B cell (primary cell): ENCODE measurements at regions of chr2 and their contacts with region 1.

Region 1: DNA sequence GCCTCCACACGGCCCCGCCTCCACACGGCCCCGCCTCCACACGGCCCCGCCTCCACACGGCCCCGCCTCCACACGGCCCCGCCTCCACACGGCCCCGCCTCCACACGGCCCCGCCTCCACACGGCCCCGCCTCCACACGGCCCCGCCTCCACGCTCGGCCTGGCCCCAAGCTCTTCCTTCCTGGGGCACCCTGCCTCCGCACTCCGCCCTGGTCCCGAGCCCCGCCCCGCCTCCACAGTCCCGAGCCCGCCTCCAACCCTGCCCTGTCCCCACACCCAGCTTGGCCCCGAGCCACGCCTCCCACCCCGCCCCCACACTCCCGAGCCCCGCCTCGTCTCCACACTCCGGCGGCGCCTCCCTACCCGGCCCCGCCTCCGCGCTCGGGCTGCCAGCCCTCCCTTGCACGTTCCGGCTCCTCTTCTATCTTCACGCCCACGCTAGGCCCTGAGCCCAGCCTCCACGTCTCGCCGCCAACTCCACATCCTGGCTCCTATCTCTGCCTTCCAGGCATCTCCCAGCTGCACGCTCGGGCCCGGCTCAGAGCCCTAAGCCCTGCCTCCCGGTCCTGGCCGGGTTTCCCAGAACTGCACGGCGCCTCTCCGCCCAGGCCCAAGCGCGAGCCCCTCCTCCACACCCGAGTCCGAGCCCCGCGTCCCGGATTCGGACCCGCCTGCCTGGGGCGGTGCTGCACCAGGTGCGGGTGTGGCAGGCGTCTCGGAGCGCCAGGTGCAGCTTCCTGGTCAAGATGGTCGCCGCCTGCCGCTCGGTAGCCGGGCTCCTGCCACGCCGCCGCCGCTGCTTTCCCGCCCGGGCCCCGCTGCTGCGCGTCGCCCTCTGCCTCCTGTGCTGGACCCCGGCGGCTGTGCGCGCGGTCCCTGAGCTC is at the start of gene TMEM87B:
- DNase-seq: peak; percentile 97
- ATAC-seq: peak; percentile 70
- H3K4me3 ChIP-seq: peak within 1 kb of the TSS; percentile 47 to 94 (median 87)
- H3K4me3 Mint-ChIP-seq: peak within 1 kb of the TSS; percentile 99
- H3K27ac ChIP-seq: peak within 1 kb of the TSS; percentile 80 to 87
- H3K27ac Mint-ChIP-seq: peak within 1 kb of the TSS; percentile 98
- H3K4me1 ChIP-seq: peaks cover 18 to 19% of the 10 kb centered on the region in 2 donors
- H3K4me1 Mint-ChIP-seq: peaks cover 41% of the 10 kb centered on the region
- H3K27me3 ChIP-seq: no peaks in the 10 kb centered on the region
- H3K27me3 Mint-ChIP-seq: no peaks in the 10 kb centered on the region
- CTCF ChIP-seq: no peak
- total RNA-seq, gene TMEM87B: 21.0 and 21.1 TPM in 2 replicates

Region 2: GRCh38 chr2:111632661-111633060 is 422.4 kb before region 1 on chr2:
- CTCF ChIA-PET with region 1: no interaction called
- POLR2A ChIA-PET with region 1: no interaction called
- intact Hi-C with region 1: no loop called
- DNase-seq: peak; percentile 13
- ATAC-seq: no peak
- H3K4me3 ChIP-seq: no peak overlapping the region
- H3K4me3 Mint-ChIP-seq: no peak overlapping the region
- H3K27ac ChIP-seq: no peak overlapping the region
- H3K27ac Mint-ChIP-seq: no peak overlapping the region
- H3K4me1 ChIP-seq: no peaks in the 10 kb centered on the region
- H3K4me1 Mint-ChIP-seq: no peaks in the 10 kb centered on the region
- H3K27me3 ChIP-seq: peaks cover 0 to 2% (median 0%) of the 10 kb centered on the region in 4 experiments
- H3K27me3 Mint-ChIP-seq: peaks cover 3% of the 10 kb centered on the region
- CTCF ChIP-seq: no peak

Region 3: DNA sequence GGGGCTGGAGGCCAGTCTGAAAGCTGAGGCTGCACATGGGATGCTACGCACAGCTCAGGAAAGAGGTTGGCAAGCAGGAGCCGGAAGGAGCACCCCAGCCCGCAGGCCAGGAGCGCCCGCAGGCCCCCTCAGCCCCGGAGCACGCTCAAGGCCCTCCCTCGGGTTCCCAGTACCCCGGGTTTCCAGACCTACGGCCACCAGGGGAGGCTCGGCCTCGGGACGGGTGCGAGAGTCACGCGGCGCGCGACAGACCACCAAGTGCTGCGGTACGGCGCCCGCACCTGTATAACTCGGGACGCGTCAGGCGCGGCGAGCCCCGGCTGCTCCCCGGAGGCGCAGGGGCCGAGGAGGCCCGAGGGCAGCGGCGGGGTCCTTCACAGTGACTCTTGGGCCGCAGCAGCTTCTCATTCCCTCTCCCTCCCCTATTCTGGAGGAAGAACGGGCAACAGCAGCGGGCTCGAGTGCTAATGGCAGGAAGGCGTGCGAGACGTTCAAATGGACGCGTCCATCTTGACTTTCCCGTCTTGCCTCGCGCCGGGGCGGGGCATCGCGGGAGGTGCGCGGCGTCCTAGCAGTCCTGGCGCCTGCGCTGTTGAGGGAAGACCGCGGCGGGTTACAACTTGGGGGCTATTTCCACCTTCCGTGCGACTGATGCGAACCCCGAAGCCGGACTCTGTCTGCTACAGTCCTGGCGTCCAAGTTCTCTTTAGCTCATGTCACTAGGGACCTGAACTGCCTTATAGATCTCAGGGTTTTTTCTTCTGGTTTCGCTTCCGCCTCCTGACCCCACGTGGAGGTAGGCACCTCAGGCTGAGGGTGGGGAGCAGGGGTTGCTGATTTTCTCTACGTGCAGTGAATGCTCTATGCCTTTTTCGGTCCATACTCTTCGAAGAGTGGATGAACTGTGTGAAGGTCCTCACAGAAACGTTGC is 171.2 kb before region 1 on chr2 and contains the start of gene ANAPC1:
- CTCF ChIA-PET with region 1: interaction called, 83 read pairs
- POLR2A ChIA-PET with region 1: interaction called, 10 read pairs
- intact Hi-C with region 1: loop called (anchors 1 kb)
- DNase-seq: peak; percentile 92
- ATAC-seq: peak; percentile 93
- H3K4me3 ChIP-seq: peak within 1 kb of the TSS; percentile 50 to 94 (median 92)
- H3K4me3 Mint-ChIP-seq: peak within 1 kb of the TSS; percentile 95
- H3K27ac ChIP-seq: peak within 1 kb of the TSS; percentile 84 to 93
- H3K27ac Mint-ChIP-seq: peak within 1 kb of the TSS; percentile 98
- H3K4me1 ChIP-seq: peaks cover 10 to 18% of the 10 kb centered on the region in 2 donors
- H3K4me1 Mint-ChIP-seq: peaks cover 12% of the 10 kb centered on the region
- H3K27me3 ChIP-seq: no peaks in the 10 kb centered on the region
- H3K27me3 Mint-ChIP-seq: no peaks in the 10 kb centered on the region
- CTCF ChIP-seq: no peak
- total RNA-seq, gene ANAPC1: 59.4 and 69.3 TPM in 2 replicates

Region 4: GRCh38 chr2:112481050-112481527 is 426.0 kb after region 1 on chr2:
- CTCF ChIA-PET with region 1: no interaction called
- POLR2A ChIA-PET with region 1: no interaction called
- intact Hi-C with region 1: loop called (anchors 1 kb)
- DNase-seq: peak; percentile 87
- ATAC-seq: peak; percentile 67
- H3K4me3 ChIP-seq: peak overlapping the region; percentile 84 to 96 (median 88)
- H3K4me3 Mint-ChIP-seq: peak overlapping the region; percentile 93
- H3K27ac ChIP-seq: peak overlapping the region; percentile 79 to 86
- H3K27ac Mint-ChIP-seq: peak overlapping the region; percentile 97
- H3K4me1 ChIP-seq: peaks cover 16 to 23% of the 10 kb centered on the region in 2 donors
- H3K4me1 Mint-ChIP-seq: peaks cover 18% of the 10 kb centered on the region
- H3K27me3 ChIP-seq: no peaks in the 10 kb centered on the region
- H3K27me3 Mint-ChIP-seq: no peaks in the 10 kb centered on the region
- CTCF ChIP-seq: peak; percentile 91

Region 5: GRCh38 chr2:112645310-112646101 is 590.4 kb after region 1 on chr2 and contains the start of gene SLC20A1:
- CTCF ChIA-PET with region 1: no interaction called
- POLR2A ChIA-PET with region 1: interaction called, 5 read pairs
- intact Hi-C with region 1: loop called (anchors 5 kb)
- DNase-seq: peak; percentile 98
- ATAC-seq: peak; percentile 93
- H3K4me3 ChIP-seq: peak within 1 kb of the TSS; percentile 65 to 98 (median 90)
- H3K4me3 Mint-ChIP-seq: peak within 1 kb of the TSS; percentile 94
- H3K27ac ChIP-seq: peak within 1 kb of the TSS; percentile 90 to 96
- H3K27ac Mint-ChIP-seq: peak within 1 kb of the TSS; percentile 90
- H3K4me1 ChIP-seq: peaks cover 15 to 20% of the 10 kb centered on the region in 2 donors
- H3K4me1 Mint-ChIP-seq: peaks cover 26% of the 10 kb centered on the region
- H3K27me3 ChIP-seq: no peaks in the 10 kb centered on the region
- H3K27me3 Mint-ChIP-seq: no peaks in the 10 kb centered on the region
- CTCF ChIP-seq: peak; percentile 69
- total RNA-seq, gene SLC20A1: 54.9 and 57.1 TPM in 2 replicates